ENCODE measurements at regions of chr2 and their contacts with region 1.

Region 1: GRCh38 chr2:26605195-26605998 is 35.8 kb downstream of the CIB4 start:
- DNase-seq: peak in 1 of 2 donors; percentile 24
- H3K4me3 ChIP-seq: no peak overlapping the region
- H3K27ac ChIP-seq: peak overlapping the region in 1 of 2 donors; percentile 63
- H3K4me1 ChIP-seq: peaks cover 0 to 7% of the 10 kb centered on the region in 2 donors
- H3K27me3 ChIP-seq: no peaks in the 10 kb centered on the region
- CTCF ChIP-seq: peak; percentile 36 to 87 (median 85)
- POLR2A ChIP-seq: no peak

Region 2: DNA sequence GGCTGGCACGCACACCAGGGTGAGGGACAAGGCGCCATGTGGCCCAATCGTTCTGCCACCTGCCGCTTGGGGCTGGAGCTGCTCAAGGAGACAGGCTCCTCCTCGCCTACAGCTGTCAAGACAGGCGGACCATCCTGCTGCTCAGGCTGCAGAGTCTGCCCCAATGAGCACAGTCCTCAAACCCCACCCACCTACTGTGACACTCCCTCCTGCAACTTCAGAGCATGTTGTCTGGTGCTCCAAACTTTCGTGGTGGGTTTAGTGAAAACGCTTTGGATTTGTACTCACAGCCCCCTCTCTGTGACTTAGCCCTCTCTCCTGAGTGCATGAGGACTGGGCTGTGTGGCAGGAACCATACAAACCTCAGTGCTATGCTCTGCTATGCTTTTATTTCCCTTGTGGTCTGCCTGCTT is 135.5 kb after region 1 on chr2:
- intact Hi-C with region 1: loop called (anchors 5 kb)
- DNase-seq: no peak
- H3K4me3 ChIP-seq: no peak overlapping the region
- H3K27ac ChIP-seq: no peak overlapping the region
- H3K4me1 ChIP-seq: no peaks in the 10 kb centered on the region
- H3K27me3 ChIP-seq: no peaks in the 10 kb centered on the region
- CTCF ChIP-seq: no peak
- POLR2A ChIP-seq: no peak

Measured in breast epithelium (tissue), 4 donors.